Heart right ventricle (tissue), 16 donors: ENCODE measurements at regions of chr4 and their contacts with region 1.

Region 1: GRCh38 chr4:3449574-3450534 is 8.1 kb downstream of the HGFAC start:
- DNase-seq: no peak
- ATAC-seq: no peak
- H3K4me3 ChIP-seq: no peak overlapping the region
- H3K27ac ChIP-seq: no peak overlapping the region
- H3K4me1 ChIP-seq: no peaks in the 10 kb centered on the region
- H3K27me3 ChIP-seq: no peaks in the 10 kb centered on the region
- CTCF ChIP-seq: no peak

Region 2: GRCh38 chr4:2763511-2763967 is 686.3 kb before region 1 on chr4:
- intact Hi-C with region 1: no loop called
- DNase-seq: no peak
- ATAC-seq: peak in 7 of 8 donors; percentile 1 to 43 (median 23)
- H3K4me3 ChIP-seq: peak overlapping the region; percentile 21 to 64 (median 56)
- H3K27ac ChIP-seq: peak overlapping the region in 9 of 10 donors; percentile 44 to 83 (median 69)
- H3K4me1 ChIP-seq: peaks cover 0 to 23% (median 17%) of the 10 kb centered on the region in 9 donors
- H3K27me3 ChIP-seq: no peaks in the 10 kb centered on the region
- CTCF ChIP-seq: no peak

Region 3: GRCh38 chr4:3199653-3200422 is 250.0 kb before region 1 on chr4:
- intact Hi-C with region 1: loop called in 6 of 10 experiments (anchors 5 to 10 kb)
- DNase-seq: no peak
- ATAC-seq: peak in 3 of 8 donors; percentile 25 to 43 (median 36)
- H3K4me3 ChIP-seq: no peak overlapping the region
- H3K27ac ChIP-seq: no peak overlapping the region
- H3K4me1 ChIP-seq: peaks cover 0 to 35% (median 0%) of the 10 kb centered on the region in 9 donors
- H3K27me3 ChIP-seq: no peaks in the 10 kb centered on the region
- CTCF ChIP-seq: no peak